Posterior vena cava (tissue), 2 donors: ENCODE measurements at regions of chr2 and their contacts with region 1.

Region 1: DNA sequence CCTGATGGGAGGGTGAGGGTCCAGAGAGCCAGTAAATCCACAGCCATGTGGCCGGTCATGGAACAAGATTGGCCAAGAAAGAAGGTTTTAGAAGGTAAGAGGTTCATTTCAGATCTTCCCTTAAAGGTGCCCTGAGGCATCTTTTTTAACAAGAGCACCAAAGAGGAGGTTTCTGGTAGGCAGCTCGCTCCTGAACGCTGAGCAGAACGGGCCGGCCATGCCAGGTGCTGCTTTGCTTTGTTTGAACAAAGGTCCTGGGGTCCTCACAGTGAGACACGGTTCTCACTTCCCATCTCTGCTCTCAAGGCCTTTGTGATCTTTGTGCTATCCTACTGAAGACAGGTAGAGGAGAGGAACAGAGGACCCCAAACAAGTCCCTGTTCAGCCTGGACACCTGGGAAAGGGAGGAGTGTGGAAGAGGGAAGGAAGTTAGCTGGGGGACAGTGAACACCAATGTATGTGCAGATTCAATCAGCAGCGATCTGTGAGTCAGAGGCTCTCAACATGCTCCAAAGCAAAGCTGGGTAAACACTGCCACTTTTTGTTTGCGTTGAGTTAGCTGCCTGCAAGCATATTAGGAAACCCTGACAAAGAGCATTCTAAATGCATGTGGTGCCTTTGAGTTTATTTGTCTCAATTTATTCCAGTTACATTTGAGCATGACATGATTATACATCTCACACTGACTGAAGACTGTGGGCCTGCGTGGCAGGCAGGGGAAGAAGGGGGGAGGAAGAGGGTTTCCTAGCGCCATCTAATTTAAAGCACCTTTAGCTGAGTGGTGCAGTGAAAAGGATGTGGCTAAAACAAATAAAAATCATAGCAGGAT is 102.4 kb downstream of the ASB1 start:
- DNase-seq: peak; percentile 42

Region 2: DNA sequence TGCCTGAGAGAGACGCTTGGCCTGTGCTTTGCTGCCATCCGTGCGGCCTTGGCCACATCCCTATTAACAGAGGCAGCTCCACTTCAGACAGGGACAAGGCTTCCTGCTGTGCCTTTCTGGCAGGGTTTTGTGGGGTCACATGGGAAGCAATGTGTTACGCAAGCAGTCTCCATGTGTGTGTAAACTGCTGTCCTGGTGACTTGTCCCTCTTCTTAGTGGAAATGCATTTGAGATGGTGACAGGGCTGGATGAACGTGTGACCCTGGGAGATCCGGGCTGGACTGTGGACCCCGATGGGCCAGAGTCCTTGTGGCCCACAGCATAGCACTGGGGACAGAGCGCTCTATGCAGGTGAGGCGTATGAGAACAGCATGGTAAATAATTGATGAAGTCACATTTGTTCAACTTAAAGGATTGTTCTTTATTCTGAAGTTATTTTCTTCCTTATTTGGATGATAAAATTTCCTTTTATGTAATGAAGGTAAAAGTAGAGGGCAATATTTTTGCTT is 79.2 kb before region 1 on chr2:
- intact Hi-C with region 1: no loop called
- DNase-seq: peak; percentile 86

Region 3: DNA sequence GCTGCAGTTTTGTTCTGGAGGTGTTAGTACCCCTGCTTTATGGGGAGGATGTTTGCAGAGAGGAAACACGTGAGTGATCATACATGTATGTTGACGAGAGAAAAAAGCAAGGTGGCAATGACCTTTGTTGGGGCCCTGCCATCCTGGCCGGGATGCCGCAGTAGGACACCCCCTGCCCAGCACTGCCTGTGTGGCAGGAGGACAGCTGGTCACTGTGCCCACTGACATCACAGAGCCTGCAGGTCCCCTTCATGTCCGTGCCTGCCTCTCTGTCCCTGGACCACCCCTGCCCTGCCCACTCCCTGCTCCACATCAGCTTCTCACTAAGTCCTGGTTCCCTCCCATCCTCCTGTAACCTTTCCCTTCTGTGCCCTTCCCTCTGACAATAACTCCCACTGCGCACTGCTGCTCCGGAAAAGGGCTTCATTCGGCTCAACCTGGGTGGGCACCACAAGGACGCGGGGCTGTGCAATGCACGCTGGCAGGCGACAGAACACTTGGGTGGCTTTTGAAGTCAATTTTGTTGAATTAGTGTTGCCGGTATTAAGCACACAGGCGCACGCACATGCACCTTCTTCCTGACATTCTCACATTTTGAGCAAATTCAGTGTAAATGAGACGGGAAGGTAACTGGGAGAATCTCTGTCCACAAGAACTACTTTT is 267.2 kb after region 1 on chr2:
- intact Hi-C with region 1: loop called in 1 of 2 experiments (anchors 5 kb)
- DNase-seq: no peak

Region 4: GRCh38 chr2:240111251-240111650 is 1582.1 kb after region 1 on chr2:
- intact Hi-C with region 1: no loop called
- DNase-seq: no peak